ENCODE measurements at regions of chr20 and their contacts with region 1.

Region 1: DNA sequence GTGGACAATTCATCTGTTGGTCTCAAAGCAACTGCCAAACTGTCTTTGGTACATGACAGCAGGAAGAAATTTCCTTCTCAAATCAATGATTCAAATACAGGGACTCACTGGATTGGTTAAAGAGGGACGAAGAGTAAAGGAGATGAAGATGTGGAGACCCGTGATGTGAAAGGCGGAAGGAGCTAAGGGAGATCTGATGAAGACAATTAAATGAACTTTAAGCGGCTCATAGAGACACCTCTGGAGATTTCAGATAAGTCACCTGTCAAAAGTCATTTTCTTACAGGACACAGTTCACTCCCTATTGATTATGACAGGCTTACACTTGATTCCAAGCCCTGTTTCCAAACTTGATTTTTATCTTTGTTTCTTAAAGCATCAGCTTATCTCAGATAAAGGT is 466.3 kb downstream of the DOK5 start:
- DNase-seq: no peak
- ATAC-seq: no peak
- H3K4me3 ChIP-seq: no peak overlapping the region
- H3K27ac ChIP-seq: no peak overlapping the region
- H3K4me1 ChIP-seq: no peaks in the 10 kb centered on the region
- H3K27me3 ChIP-seq: no peaks in the 10 kb centered on the region
- CTCF ChIP-seq: no peak

Region 2: DNA sequence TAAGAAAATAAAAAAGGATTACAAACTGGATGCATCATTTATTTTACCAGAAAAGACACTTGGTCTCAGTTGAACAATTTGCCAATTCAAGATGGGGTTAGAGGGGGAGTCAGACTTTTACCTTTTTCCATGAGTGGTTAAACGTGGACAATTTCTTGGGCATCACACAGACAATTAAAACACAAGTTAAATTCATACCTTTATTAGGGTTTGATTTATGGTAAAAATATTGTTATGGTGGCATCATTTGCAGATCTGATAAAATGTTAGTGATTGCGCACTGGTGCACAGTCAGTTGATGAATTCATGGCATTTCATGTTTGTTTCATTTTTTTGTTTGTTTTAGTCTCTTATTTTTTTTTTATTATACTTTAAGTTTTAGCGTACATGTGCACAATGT is 66.4 kb before region 1 on chr20:
- intact Hi-C with region 1: no loop called
- DNase-seq: no peak
- ATAC-seq: no peak
- H3K4me3 ChIP-seq: no peak overlapping the region
- H3K27ac ChIP-seq: no peak overlapping the region
- H3K4me1 ChIP-seq: no peaks in the 10 kb centered on the region
- H3K27me3 ChIP-seq: no peaks in the 10 kb centered on the region
- CTCF ChIP-seq: no peak

Region 3: GRCh38 chr20:54995553-54995952 is 53.9 kb after region 1 on chr20:
- intact Hi-C with region 1: loop called in 1 of 2 experiments (anchors 5 kb)
- DNase-seq: no peak
- ATAC-seq: no peak
- H3K4me3 ChIP-seq: no peak overlapping the region
- H3K27ac ChIP-seq: no peak overlapping the region
- H3K4me1 ChIP-seq: no peaks in the 10 kb centered on the region
- H3K27me3 ChIP-seq: no peaks in the 10 kb centered on the region
- CTCF ChIP-seq: no peak

Measured in psoas muscle (tissue), 8 donors.